ENCODE measurements at regions of chr1 and their contacts with region 1.

Region 1: GRCh38 chr1:159891275-159892157 is 8.4 kb downstream of the CFAP45 start:
- DNase-seq: peak; percentile 91 to 94
- ATAC-seq: peak; percentile 92
- H3K4me3 ChIP-seq: no peak overlapping the region
- H3K27ac ChIP-seq: no peak overlapping the region
- H3K4me1 ChIP-seq: no peaks in the 10 kb centered on the region
- H3K27me3 ChIP-seq: no peaks in the 10 kb centered on the region

Region 2: DNA sequence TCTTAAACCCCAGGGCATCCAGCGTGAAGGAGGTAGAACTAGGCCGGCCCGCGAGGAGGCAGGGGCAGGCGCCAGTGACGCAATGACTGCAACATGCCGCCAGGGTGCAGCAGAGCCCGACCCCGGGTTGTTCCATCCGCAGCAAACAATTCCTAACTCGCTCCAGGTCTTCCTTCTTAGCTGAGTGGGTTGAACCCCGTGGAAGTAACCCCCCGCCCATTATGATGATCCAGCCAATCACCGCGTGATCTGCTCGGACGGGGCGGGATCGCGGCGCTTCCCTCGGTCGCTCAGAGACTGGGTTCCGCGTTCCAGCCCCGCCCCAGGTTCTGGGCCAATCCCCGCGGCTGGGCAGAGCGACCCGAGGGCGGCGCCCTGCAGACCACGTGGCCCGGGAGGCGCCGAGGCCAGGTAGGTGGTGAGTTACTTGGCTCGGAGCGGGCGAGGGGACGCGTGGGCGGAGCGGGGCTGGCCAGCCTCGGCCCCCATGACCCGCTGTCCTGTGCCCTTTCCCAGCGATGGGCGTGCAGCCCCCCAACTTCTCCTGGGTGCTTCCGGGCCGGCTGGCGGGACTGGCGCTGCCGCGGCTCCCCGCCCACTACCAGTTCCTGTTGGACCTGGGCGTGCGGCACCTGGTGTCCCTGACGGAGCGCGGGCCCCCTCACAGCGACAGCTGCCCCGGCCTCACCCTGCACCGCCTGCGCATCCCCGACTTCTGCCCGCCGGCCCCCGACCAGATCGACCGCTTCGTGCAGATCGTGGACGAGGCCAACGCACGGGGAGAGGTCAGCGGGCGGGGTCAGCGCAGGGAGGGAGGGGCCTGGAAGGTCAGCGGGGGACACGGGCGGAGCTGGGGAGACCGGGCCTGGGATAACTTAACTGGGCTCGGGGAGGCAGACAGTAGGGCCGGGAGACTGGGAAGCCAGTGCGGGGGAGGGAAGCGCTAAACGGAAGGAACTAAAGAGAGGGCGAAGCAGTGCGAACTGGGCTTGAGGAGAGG is 110.6 kb before region 1 on chr1 and contains the start of gene DUSP23:
- intact Hi-C with region 1: loop called (anchors 5 kb)
- DNase-seq: peak; percentile 99
- ATAC-seq: peak; percentile 98
- H3K4me3 ChIP-seq: peak within 1 kb of the TSS; percentile 39 to 70
- H3K27ac ChIP-seq: peak within 1 kb of the TSS; percentile 33 to 49
- H3K4me1 ChIP-seq: peaks cover 0 to 7% of the 10 kb centered on the region in 2 donors
- H3K27me3 ChIP-seq: no peaks in the 10 kb centered on the region
- total RNA-seq, gene DUSP23: 47.1 to 47.7 TPM

Region 3: DNA sequence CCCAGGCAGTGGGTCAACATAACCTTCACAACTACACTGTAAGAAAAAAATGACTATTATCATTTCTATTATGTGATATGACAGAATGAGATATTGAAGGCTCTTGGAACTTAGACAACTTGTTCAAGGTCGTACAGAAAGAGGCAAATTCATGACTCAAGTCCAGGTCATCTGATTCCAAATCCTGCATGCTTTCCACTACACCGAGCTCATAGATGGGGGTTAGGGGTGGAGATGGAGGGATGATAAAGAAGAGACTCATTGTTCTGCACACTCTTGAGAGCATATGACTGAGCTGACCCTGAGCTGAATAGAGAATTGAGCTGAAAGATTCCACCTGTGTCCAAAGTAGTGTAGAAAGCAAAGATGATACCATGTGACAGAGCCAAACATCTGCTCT is 86.6 kb before region 1 on chr1:
- intact Hi-C with region 1: no loop called
- DNase-seq: no peak
- ATAC-seq: no peak
- H3K4me3 ChIP-seq: no peak overlapping the region
- H3K27ac ChIP-seq: no peak overlapping the region
- H3K4me1 ChIP-seq: no peaks in the 10 kb centered on the region
- H3K27me3 ChIP-seq: no peaks in the 10 kb centered on the region

Region 4: GRCh38 chr1:159854693-159855192 is 36.8 kb before region 1 on chr1:
- intact Hi-C with region 1: loop called in 1 of 2 experiments (anchors 2 kb)
- DNase-seq: peak; percentile 93
- ATAC-seq: peak; percentile 95
- H3K4me3 ChIP-seq: peak overlapping the region; percentile 38 to 87
- H3K27ac ChIP-seq: peak overlapping the region; percentile 16 to 61
- H3K4me1 ChIP-seq: no peaks in the 10 kb centered on the region
- H3K27me3 ChIP-seq: no peaks in the 10 kb centered on the region

Region 5: DNA sequence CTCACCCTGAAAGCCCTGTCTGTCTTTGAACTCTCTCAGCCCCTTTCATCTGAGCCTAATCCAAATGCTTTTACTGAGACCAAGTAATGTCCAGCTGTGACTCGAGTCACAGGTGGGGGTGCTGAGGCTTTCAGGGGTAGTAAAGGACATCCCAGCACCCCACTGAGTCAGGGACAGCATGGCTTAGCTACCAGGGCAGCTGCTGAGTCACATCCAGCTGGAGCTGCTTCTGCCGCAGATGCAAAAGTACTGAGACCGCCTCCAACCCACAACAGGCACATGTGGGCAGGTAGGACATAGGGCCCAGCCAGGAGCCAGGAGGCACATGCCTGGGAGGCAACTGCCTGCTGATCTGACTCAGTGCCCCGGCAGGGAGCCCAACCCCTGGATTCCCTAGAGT is 22.3 kb before region 1 on chr1:
- intact Hi-C with region 1: no loop called
- DNase-seq: no peak
- ATAC-seq: no peak
- H3K4me3 ChIP-seq: no peak overlapping the region
- H3K27ac ChIP-seq: no peak overlapping the region
- H3K4me1 ChIP-seq: no peaks in the 10 kb centered on the region
- H3K27me3 ChIP-seq: no peaks in the 10 kb centered on the region

Region 6: GRCh38 chr1:159936273-159936904 is 44.9 kb after region 1 on chr1:
- intact Hi-C with region 1: loop called in 1 of 2 experiments (anchors 5 kb)
- DNase-seq: peak; percentile 86 to 92
- ATAC-seq: peak; percentile 85
- H3K4me3 ChIP-seq: no peak overlapping the region
- H3K27ac ChIP-seq: no peak overlapping the region
- H3K4me1 ChIP-seq: no peaks in the 10 kb centered on the region
- H3K27me3 ChIP-seq: no peaks in the 10 kb centered on the region

Region 7: DNA sequence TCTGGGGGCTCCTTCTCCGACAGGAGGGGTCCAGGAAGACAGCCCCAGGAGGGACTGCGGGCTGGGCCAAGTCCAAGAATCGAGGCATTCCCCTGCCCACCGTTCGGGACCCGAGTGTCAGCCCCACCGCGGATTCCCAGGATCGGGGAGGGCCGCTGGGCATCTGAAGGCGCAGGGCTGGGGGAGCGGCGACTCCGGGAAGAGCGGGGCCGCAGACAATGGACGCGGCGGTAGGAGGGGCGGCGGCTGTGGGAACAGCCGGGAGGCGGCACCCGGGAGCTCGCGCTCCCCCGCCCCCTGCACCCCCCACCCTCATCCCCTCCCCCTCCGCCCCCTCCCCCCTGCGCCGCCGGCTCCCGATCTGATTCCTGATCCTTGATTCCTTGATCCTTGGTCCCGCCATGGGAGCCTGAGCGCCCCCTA is 508.7 kb after region 1 on chr1 and contains the start of gene VANGL2:
- intact Hi-C with region 1: no loop called
- DNase-seq: peak; percentile 72 to 86
- ATAC-seq: peak; percentile 90
- H3K4me3 ChIP-seq: peak within 1 kb of the TSS; percentile 15 to 16
- H3K27ac ChIP-seq: no peak within 1 kb of the TSS
- H3K4me1 ChIP-seq: no peaks in the 10 kb centered on the region
- H3K27me3 ChIP-seq: peaks cover 0 to 2% of the 10 kb centered on the region in 2 donors
- total RNA-seq, gene VANGL2: 1.3 to 4.4 TPM

Measured in aorta (tissue), 5 donors.